ENCODE measurements at regions of chr2 and their contacts with region 1.

Region 1: DNA sequence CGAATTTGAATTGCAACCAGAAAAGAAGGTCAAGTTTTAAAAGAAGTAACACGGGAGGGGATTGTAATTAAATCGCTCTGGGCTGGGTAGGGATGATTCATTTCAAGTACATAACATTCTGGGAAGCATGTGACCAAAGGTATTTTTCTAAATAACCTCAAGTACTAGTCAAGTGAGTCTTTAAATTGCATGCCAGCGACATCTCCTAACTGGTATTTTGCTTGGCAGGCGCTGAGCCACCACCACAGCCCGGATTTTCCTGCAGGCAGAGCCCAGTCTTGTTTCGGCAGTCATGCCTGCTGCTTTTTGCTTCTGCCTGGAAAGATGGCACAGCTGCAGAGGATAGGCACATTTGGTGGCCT is 33.7 kb upstream of the NPAS2 start:
- DNase-seq: peak; percentile 87
- H3K4me3 ChIP-seq: no peak overlapping the region
- CTCF ChIP-seq: no peak

Region 2: GRCh38 chr2:100682536-100682935 is 103.7 kb before region 1 on chr2:
- in situ Hi-C with region 1: no loop called
- DNase-seq: no peak
- H3K4me3 ChIP-seq: no peak overlapping the region
- CTCF ChIP-seq: no peak

Region 3: GRCh38 chr2:100752628-100753333 is 33.5 kb before region 1 on chr2:
- in situ Hi-C with region 1: loop called (anchors 5 kb)
- DNase-seq: no peak
- H3K4me3 ChIP-seq: no peak overlapping the region
- CTCF ChIP-seq: no peak

Region 4: DNA sequence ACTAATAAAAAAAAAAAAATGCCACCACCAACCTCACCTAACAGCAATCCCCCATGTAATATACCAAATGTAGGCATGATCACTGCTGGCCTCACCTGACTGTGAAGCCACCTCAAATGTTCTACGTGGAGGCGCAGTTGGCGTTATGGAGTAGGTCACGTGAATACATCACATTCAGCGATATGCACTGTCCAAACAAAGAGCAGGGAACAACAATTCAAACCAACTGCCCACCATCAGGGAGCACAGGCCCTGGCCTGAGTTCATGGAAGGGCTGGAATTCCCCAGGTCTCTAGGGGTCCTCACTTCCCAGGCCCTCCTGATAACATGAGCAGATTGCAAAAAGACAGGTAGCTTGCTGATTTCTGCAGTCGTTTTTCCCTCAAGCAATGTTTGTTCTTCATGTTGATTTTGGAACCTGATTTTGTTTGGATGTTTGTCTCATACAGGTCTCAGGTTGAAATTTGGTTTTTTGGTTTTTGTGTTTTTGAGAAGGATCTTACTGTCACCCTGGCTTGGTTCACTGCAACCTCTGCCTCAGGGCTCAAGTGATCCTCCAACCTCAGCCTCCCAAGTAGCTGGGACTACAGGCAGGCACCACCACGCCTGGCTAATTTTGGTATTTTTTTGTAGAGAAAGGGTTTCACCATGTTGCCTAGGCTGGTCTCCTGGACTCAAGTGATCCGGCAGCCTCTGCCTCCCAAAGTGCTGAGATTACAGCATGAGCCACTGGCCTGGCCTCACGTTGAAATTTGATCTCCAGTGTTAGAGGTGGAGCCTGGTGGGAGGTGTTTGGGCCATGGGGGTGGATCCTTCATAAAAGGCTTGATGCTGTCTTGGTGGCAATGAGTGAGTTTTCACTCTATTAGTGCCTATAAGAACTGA is 349.4 kb after region 1 on chr2:
- in situ Hi-C with region 1: no loop called
- DNase-seq: no peak
- H3K4me3 ChIP-seq: no peak overlapping the region
- CTCF ChIP-seq: no peak

Measured in astrocyte of the cerebellum (primary cell).